Head of caudate nucleus (tissue), 42 donors: ENCODE measurements at regions of chr4 and their contacts with region 1.

Region 1: DNA sequence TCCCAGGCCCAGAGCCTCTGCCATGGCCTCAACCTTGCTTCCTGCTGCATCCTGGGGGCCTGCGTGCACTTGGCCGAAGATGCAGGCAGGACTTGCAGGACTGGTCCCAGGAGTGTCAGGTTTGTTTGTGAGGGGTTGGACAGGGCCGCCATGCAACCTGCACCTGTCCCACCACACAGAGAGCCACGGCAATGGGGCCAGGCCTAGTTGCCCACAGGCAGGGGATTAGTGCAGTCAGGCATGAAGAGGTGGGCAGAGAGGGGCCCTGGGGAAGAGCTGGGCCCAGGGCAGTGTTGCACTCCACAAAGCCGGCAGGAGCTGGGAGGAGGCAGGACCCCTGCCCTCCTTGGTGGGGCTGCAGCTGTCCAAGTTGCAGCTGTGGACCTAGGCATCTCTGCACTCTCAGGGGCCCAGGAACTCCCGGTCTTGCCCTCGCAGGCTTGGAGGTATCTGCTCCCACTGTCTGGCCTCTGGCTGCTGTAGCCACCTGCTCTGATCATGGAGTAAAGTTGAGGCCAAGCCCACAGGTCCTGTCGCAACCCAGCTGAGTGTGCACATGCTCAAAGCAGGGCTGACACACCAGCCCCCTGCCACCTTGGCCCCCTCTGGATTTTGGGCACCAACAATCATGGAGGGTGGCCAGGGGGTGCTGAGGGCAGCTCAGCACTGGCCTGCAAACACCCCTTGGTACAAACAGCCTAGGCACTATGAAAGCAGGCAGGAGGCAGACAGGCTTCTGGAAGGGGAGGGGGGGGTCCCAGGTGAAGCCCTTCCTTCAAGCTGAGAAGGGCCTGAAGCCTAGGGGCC is 190.4 kb upstream of the PCDH10 start:
- DNase-seq: no peak

Region 2: DNA sequence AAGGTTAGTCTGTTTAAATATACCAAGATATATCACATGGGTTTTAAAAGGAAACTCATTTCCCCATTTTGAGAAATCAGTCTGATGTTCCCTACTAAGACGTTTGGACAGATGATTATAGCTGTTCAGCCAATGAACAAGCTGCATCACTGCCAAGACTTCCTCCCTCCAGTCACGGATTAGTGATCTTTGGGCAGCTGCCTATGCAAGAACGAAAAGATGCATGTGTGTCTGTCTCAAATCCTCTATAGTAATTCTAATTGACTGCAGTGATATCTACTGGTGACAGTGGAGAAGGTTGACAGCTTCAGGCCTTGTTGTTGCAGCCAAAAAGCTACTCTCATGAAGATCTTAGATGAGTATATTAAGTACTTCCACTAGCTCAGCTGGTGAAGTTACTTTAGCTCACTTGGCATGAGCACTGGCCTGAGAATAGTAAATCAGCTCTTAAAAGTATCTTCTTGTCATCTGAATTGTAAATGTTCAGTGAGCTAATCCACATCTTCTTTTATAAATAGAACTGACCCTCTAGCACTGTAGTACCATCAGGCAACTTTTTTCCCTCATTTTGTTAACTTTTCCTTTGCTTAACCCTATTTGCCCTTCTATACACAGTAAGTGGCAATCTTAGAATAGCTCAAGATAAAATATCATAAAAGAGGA is 55.9 kb after region 1 on chr4:
- intact Hi-C with region 1: no loop called
- DNase-seq: peak in 12 of 42 donors; percentile 4 to 50 (median 14)

Region 3: GRCh38 chr4:133148690-133149363 is 190.2 kb after region 1 on chr4 and contains the start of gene PCDH10:
- intact Hi-C with region 1: loop called (anchors 10 kb)
- DNase-seq: peak; percentile 98 to 100 (median 99)

Region 4: DNA sequence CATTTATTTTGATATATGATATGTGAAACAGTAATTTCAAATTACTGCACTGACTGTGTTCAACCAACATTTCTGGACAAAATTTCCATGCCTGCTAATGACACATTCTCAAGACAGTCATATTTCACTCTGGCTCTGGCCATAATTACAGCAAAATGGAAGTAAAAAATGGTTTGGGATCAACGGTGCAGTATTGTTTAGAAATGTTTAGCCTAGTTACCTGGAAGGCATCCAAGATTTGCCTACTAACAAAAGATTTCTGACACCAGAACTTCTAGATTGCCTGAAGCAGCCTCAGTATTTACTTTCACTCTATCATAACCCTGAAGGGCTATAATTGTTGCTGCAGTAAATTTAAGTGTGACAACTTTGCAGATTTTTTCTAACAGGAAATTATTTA is 606.7 kb after region 1 on chr4:
- intact Hi-C with region 1: no loop called
- DNase-seq: no peak